ENCODE measurements at regions of chr18 and their contacts with region 1.

Region 1: GRCh38 chr18:35343936-35344735 is at the start of gene ZNF24:
- DNase-seq: peak; percentile 95
- H3K4me3 Mint-ChIP-seq: peak within 1 kb of the TSS; percentile 87
- H3K27ac Mint-ChIP-seq: peak within 1 kb of the TSS; percentile 96
- H3K4me1 Mint-ChIP-seq: peaks cover 45% of the 10 kb centered on the region
- H3K27me3 Mint-ChIP-seq: no peaks in the 10 kb centered on the region
- total RNA-seq, gene ZNF24: 40.6 to 48.6 TPM

Region 2: GRCh38 chr18:34867520-34867919 is 476.6 kb before region 1 on chr18:
- CTCF ChIA-PET with region 1: no interaction called
- POLR2A ChIA-PET with region 1: no interaction called
- intact Hi-C with region 1: loop called (anchors 5 kb)
- DNase-seq: peak; percentile 24
- H3K4me3 Mint-ChIP-seq: no peak overlapping the region
- H3K27ac Mint-ChIP-seq: no peak overlapping the region
- H3K4me1 Mint-ChIP-seq: peaks cover 35% of the 10 kb centered on the region
- H3K27me3 Mint-ChIP-seq: peaks cover 12% of the 10 kb centered on the region

Region 3: DNA sequence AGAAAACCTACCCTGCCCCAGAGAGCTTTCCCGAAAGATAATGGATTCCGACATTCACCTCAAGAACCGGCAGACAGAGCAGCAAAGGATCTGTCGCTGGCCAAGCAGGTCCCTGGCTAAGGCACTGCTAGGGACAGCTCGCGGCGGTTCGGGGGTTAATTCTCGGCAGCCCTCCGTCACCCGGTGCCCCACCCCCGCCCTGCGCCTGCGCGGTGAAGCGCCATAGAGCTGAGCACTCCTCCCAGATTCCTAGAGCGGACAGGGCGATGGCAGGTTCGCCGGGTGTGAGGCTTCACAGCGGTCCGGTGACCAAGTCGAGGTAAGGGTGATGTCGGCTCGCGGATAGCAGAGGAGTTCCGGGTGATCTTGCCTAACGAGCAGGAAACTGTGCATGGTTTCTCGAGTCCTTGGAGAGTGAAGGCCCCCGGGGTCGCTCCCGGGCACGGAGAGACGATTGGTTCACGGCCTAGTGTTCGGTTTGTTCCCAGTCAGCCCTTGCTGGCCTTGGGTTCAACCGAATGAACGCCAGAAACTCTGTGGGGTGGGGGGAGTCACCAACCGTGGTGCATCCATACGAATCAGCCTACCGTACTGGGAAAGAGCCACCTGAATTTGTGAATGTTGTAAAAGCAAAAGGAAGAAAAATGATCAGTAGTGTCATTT is 53.9 kb before region 1 on chr18 and contains the start of gene ZSCAN30:
- CTCF ChIA-PET with region 1: no interaction called
- POLR2A ChIA-PET with region 1: interaction called, 7 read pairs
- intact Hi-C with region 1: loop called (anchors 1 kb)
- DNase-seq: peak; percentile 97
- H3K4me3 Mint-ChIP-seq: peak within 1 kb of the TSS; percentile 98
- H3K27ac Mint-ChIP-seq: peak within 1 kb of the TSS; percentile 93
- H3K4me1 Mint-ChIP-seq: peaks cover 37% of the 10 kb centered on the region
- H3K27me3 Mint-ChIP-seq: no peaks in the 10 kb centered on the region
- total RNA-seq, gene ZSCAN30: 17.9 to 19.6 TPM

Region 4: GRCh38 chr18:35376742-35377695 is 32.9 kb after region 1 on chr18 and contains the start of gene ZNF396:
- CTCF ChIA-PET with region 1: no interaction called
- POLR2A ChIA-PET with region 1: no interaction called
- intact Hi-C with region 1: loop called (anchors 1 kb)
- DNase-seq: peak; percentile 83
- H3K4me3 Mint-ChIP-seq: peak within 1 kb of the TSS; percentile 72
- H3K27ac Mint-ChIP-seq: no peak within 1 kb of the TSS
- H3K4me1 Mint-ChIP-seq: peaks cover 10% of the 10 kb centered on the region
- H3K27me3 Mint-ChIP-seq: no peaks in the 10 kb centered on the region
- total RNA-seq, gene ZNF396: 0.93 to 1.6 TPM

Region 5: GRCh38 chr18:35467624-35468016 is 123.5 kb after region 1 on chr18:
- CTCF ChIA-PET with region 1: no interaction called
- POLR2A ChIA-PET with region 1: no interaction called
- intact Hi-C with region 1: no loop called
- DNase-seq: no peak
- H3K4me3 Mint-ChIP-seq: no peak overlapping the region
- H3K27ac Mint-ChIP-seq: no peak overlapping the region
- H3K4me1 Mint-ChIP-seq: no peaks in the 10 kb centered on the region
- H3K27me3 Mint-ChIP-seq: no peaks in the 10 kb centered on the region

Region 6: DNA sequence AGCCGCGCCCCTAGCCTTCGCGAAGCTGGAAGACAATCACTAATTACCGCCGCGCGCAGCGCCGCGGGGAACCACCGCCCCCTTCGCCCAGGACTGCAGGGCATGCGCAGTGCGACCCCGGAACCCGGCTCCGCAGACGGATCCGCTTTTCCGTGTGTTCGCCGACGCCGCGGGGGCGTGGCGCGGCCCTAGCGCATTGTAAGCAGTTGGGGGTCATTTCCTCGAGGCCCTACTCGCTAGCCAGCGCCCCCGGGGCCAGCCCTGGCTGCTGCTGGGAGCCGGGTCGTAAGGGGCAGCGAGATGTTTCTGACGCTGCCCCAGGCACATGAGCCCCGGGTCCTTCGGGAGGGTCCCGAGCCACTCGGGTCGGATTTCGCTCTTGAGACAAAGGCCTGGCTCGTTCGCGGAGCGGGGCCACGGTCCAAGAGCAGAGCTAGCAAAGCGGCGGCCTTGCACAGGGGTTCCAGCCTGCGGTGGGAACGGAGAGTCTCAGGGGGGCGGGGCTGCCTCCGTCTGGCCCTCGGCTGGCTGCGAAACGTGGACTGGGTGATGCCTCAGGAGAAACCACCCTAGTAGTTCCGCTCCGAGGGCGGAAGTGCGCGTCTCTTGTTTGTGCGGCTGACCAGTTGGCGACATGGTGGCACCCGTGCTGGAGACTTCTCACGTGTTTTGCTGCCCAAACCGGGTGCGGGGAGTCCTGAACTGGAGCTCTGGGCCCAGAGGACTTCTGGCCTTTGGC is 785.3 kb after region 1 on chr18 and contains the starts of genes ELP2 and SLC39A6:
- CTCF ChIA-PET with region 1: no interaction called
- POLR2A ChIA-PET with region 1: no interaction called
- intact Hi-C with region 1: loop called (anchors 1 kb)
- DNase-seq: peak; percentile 95
- H3K4me3 Mint-ChIP-seq: peak within 1 kb of the TSS; percentile 94
- H3K27ac Mint-ChIP-seq: peak within 1 kb of the TSS; percentile 95
- H3K4me1 Mint-ChIP-seq: peaks cover 60% of the 10 kb centered on the region
- H3K27me3 Mint-ChIP-seq: no peaks in the 10 kb centered on the region
- total RNA-seq, gene ELP2: 83.7 to 84.4 TPM
- total RNA-seq, gene SLC39A6: 23.7 to 24.3 TPM

Measured in activated CD4-positive, alpha-beta memory T cell treated with anti-CD3 and anti-CD28 coated beads for 36 hours (primary cell).